H1 (cell line): ENCODE measurements at regions of chr6 and their contacts with region 1.

Region 1: DNA sequence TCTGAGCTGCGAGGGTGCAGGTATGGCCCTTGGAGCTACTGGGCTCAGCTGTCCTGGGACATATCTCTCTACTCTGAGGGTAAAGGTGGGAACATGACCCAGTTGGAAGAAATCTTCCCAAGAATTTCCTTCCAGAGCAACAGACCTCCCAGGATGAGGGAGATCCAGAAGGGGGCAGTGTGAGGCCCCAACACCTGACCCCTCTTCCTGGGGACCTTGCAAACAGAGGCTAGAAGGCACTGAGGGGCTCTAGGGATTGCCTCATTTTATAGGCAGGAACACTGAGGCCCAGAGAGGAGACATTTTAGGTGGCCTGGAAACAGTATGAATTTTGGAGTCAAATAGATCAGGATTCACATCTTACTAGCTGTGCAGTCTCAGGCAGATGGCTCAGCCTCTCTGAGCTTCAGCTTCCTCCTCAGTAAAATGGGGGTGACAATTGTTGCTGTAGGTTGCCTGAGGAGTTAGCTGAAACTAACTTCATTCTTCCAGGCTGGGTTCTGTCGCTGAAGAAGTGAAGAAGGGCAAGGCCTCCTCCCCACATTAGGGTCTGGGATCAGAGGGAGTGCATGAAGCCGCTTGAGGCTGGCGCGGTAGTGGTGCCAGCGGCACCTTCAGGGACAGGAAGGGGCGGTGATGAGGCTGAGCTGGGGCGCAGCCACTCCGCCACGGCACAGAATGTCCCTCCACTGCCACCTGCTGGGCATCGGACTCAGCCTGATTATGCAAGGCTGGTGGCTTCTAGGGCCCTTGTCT is 11.4 kb downstream of the KCNK17 start:
- DNase-seq: peak; percentile 73 to 97
- H3K4me3 ChIP-seq: no peak overlapping the region
- H3K27ac ChIP-seq: no peak overlapping the region
- H3K4me1 ChIP-seq: peaks cover 0 to 4% (median under 1%) of the 10 kb centered on the region in 4 experiments; a peak in 2 of 7 replicates
- H3K27me3 ChIP-seq: no peaks in the 10 kb centered on the region; a peak in 1 of 7 replicates
- CTCF ChIP-seq: peak; percentile 95 to 98 (median 97)
- EP300 ChIP-seq: no peak
- POLR2A ChIP-seq: no peak
- RAD21 ChIP-seq: peak; percentile 96 to 98

Region 2: GRCh38 chr6:39088331-39088730 is 214.5 kb before region 1 on chr6:
- CTCF ChIA-PET with region 1: interaction called, 113 read pairs
- POLR2A ChIA-PET with region 1: no interaction called
- DNase-seq: peak in 1 of 2 experiments; percentile 50
- H3K4me3 ChIP-seq: peak overlapping the region in 1 of 4 experiments; percentile 5; a peak in 2 of 8 replicates
- H3K27ac ChIP-seq: no peak overlapping the region
- H3K4me1 ChIP-seq: peaks cover 10 to 35% (median 12%) of the 10 kb centered on the region in 4 experiments
- H3K27me3 ChIP-seq: no peaks in the 10 kb centered on the region
- CTCF ChIP-seq: peak; percentile 56 to 73 (median 67)
- EP300 ChIP-seq: no peak; a peak in 1 of 3 replicates
- POLR2A ChIP-seq: no peak
- RAD21 ChIP-seq: peak; percentile 61 to 74

Region 3: DNA sequence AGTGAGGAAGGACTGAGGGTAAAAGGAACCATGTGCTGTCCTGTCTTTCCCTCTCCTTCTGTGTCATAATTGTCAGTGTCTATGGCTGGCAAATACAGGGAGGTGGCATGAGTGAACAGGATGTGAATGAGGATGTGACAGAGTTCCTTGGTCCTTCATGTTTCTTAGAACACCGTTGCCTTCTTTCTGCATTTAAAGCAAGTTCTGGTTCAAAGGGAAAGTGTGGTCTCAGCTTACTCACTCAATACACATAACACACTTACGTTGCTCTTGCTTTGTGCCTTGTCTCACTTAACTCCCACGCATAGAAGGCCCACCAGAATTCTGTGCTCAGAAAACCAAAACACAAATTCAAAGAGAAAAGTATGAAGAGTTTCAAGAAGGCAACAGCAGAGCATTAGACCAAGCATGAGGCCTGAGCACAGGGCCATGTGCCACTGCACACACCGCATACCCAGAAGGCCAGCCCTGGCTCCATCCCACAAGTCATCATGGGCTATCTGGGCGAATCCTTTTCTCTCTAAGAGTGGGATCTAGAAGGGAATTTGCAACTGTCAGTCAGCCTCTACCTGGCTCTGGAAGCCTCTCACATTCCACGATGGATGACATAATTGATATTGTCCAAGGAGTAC is 149.0 kb before region 1 on chr6:
- CTCF ChIA-PET with region 1: interaction called, 145 read pairs
- POLR2A ChIA-PET with region 1: no interaction called
- DNase-seq: no peak
- H3K4me3 ChIP-seq: no peak overlapping the region
- H3K27ac ChIP-seq: no peak overlapping the region
- H3K4me1 ChIP-seq: no peaks in the 10 kb centered on the region
- H3K27me3 ChIP-seq: no peaks in the 10 kb centered on the region
- CTCF ChIP-seq: no peak
- EP300 ChIP-seq: no peak
- POLR2A ChIP-seq: no peak
- RAD21 ChIP-seq: no peak

Region 4: DNA sequence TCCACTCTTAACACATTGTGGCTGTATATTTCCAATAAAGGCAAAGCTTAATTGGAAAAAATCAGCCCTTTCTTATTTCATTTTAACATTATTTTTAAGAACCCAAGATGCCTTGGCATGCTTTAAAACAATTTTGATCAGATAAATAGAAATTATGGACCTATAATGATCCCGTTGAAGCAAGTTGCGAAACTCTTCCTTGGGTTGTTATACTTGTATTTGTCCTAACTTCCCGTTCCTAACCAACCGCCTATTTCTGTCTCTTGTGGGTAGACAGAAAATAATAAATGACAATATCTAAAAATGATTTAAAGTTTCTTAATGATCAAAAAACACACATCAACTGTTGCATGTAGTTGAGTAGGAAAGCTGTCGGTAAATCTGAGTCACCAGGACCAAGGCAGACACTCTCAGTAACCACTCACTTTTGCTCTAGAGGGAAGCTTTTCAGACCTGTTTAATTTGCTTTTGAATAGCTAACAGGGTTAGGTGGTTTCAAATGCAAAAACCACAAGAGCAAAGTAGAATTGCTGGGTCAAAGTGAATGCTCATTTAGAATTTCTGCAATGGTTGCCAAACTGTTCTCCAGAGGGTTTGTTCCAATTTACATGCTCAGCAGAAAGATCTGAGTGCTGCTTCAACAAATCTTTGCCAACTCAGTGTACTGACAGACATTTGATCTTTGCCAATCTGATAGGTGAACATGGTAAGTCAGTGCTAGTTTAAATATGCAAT is 39.4 kb before region 1 on chr6:
- CTCF ChIA-PET with region 1: interaction called, 36 read pairs
- POLR2A ChIA-PET with region 1: no interaction called
- DNase-seq: peak in 1 of 2 experiments; percentile 25
- H3K4me3 ChIP-seq: peak overlapping the region in 1 of 4 experiments; percentile 43; a peak in 1 of 8 replicates
- H3K27ac ChIP-seq: peak overlapping the region; percentile 47; the same call in 1 of the 2 replicates
- H3K4me1 ChIP-seq: peaks cover 0 to 10% (median 7%) of the 10 kb centered on the region in 4 experiments; a peak in 5 of 7 replicates
- H3K27me3 ChIP-seq: no peaks in the 10 kb centered on the region
- CTCF ChIP-seq: no peak
- EP300 ChIP-seq: no peak
- POLR2A ChIP-seq: no peak
- RAD21 ChIP-seq: 0 out of 4 replicates have a peak, but pooled peaks of 1 of the 2 experiments have one; percentile 2

Region 5: DNA sequence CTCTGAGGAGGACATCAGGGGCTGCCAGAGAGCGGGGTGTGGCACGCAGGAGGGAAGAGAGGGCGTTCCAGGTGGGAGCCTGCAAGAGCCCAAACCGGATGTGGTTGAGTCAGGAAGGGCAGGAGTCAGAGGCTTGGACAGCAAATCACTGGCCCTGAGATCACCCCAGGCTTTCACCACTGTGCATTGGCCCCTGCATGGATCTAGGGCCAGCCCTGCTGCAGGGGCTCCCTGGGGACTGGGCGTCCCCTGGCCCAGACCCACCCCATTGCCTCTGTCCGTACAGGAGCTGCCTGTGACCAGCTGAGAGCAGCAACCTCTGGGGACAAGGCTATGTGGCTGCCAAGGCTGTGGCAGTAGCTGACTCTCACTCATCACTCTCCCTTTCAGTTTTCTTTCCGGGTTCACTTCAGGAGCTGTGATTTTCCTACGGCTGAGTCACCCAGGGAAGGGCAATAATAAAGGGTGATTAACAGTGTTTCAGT is 22.6 kb before region 1 on chr6:
- CTCF ChIA-PET with region 1: interaction called, 143 read pairs
- POLR2A ChIA-PET with region 1: no interaction called
- DNase-seq: no peak
- H3K4me3 ChIP-seq: no peak overlapping the region
- H3K27ac ChIP-seq: no peak overlapping the region
- H3K4me1 ChIP-seq: peaks cover 0 to 4% (median 1%) of the 10 kb centered on the region in 4 experiments; a peak in 2 of 7 replicates
- H3K27me3 ChIP-seq: 0 out of 7 replicates have a peak, but pooled peaks cover 0 to 2% (median 0%) of the 10 kb centered on the region in 4 experiments
- CTCF ChIP-seq: no peak
- EP300 ChIP-seq: no peak
- POLR2A ChIP-seq: no peak
- RAD21 ChIP-seq: no peak